Astrocyte of the cerebellum (primary cell): ENCODE measurements at regions of chr9 and their contacts with region 1.

Region 1: GRCh38 chr9:130243015-130243734 is 22.4 kb upstream of the HMCN2 start:
- DNase-seq: no peak
- H3K4me3 ChIP-seq: no peak overlapping the region
- CTCF ChIP-seq: peak; percentile 84

Region 2: DNA sequence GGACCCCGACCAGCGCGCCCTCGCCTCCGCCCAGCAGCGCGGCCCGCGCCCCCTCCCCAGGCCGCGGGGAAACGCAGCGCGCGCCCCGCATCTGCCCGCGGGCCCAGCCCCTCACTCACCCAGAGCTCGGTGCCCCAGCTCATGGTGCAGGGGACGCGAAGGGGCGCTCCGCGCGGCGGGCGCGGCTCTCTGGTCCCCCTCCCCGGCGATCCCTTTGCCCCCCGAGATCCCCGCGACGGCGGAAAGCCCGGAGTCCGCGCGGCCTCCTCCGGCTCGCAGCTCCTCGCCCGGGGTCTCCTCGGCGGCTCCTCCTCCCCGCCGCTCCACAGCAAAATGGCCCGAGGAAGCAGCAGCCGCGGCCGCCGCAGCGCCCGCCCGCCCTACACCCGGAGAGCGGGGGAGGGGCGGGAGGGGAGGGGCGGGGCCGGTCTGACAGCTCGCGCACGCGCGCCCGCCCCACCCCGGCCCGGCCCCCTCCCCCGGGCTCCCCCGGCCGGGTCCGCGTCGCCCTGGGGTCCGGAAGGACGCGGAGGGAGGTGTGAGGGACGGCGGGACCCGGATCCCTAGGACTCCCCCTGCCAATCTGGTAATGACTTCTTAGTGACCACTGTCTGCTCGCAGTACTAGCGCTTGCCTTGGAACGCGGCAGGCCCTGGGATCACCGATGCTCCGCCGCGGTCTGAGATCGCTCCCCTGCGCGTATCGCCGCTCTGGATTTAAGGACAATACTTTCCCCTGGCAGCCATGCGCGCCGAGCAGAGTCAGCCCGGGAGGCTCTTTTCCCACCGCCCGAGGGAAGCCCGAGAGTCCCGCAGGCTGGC is 200.1 kb before region 1 on chr9 and contains the start of gene FNBP1:
- in situ Hi-C with region 1: no loop called
- DNase-seq: peak; percentile 36
- H3K4me3 ChIP-seq: peak within 1 kb of the TSS; percentile 91
- CTCF ChIP-seq: no peak

Region 3: DNA sequence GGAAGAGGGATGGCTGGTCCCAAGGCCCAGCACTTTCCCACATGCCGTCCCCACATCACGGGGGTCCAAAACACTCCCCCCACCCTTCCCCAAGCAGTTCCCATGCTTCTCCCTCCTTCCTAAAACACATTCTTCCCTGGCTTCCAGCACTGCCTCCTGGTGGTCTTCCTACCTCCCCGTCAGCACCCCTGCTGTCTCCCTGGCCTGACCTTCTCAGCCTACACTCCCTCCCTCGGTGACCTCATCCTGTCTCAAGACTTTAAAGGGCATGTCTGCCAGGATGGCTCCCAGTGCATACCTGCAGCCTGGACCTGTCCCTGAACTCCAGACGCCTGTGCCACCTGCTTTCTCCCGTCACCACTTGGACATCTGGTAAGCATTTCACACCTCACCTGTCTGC is 75.2 kb before region 1 on chr9:
- in situ Hi-C with region 1: loop called (anchors 10 kb)
- DNase-seq: no peak
- H3K4me3 ChIP-seq: no peak overlapping the region
- CTCF ChIP-seq: no peak

Region 4: GRCh38 chr9:130331573-130331972 is 88.4 kb after region 1 on chr9:
- in situ Hi-C with region 1: no loop called
- DNase-seq: peak; percentile 33
- H3K4me3 ChIP-seq: no peak overlapping the region
- CTCF ChIP-seq: no peak

Region 5: DNA sequence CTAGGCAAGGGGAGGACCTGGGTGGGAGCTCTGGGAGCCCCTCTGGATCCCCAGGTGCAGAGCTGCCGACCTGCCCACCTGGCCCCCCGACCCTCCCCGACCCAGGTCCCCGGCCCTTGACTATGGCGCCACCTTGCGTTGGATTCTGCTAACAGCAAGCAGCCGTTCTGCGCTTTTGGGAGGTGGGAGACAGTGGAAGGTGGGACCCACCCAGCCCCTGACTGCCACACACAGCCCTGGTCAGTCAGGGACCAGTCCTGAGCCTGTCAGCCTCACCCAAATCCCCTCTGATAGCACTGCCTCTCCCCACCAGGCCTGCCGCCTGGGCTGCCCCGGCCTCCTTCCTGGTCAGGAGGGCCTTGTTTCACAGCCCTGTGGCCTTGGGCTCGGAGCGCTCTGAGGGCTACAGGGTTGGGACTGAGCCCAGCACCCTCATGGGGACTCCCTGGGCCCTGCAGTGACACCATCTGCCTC is 100.3 kb after region 1 on chr9:
- in situ Hi-C with region 1: loop called (anchors 10 kb)
- DNase-seq: no peak
- H3K4me3 ChIP-seq: no peak overlapping the region
- CTCF ChIP-seq: peak; percentile 78